Cardiac septum (tissue), 1 donor: ENCODE measurements at regions of chr11 and their contacts with region 1.

Region 1: GRCh38 chr11:12693479-12694181 is 19.4 kb downstream of the TEAD1 start:
- DNase-seq: no peak

Region 2: GRCh38 chr11:12377824-12378593 is 315.6 kb before region 1 on chr11:
- intact Hi-C with region 1: loop called (anchors 5 kb)
- DNase-seq: peak; percentile 84

Region 3: GRCh38 chr11:12653725-12654124 is 39.9 kb before region 1 on chr11:
- intact Hi-C with region 1: no loop called
- DNase-seq: no peak

Region 4: DNA sequence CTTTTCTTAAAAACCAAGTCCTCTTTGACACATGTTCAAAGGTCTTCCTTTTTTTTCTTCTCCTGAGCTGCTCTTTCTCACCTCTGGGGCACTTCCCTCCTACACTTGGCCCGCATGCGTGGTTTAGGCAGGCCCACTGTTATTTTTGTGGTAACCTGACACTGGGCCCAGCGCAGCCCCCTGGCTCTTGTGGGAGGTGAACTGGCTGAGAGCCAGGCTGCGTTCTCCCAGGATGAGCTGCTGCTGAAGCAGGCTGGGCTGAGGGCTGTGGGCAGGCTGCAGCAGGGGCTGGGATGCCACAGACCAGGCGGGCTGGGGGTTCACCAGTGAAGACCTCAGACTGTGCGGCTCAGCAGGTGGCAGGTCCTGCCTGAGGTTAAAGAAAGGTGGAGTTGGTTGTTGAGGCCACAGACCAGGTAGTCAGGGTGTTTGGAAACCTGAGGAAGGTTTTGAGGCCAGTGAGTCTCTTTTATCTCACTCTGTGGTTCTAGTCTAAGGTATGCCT is 53.0 kb after region 1 on chr11:
- intact Hi-C with region 1: loop called (anchors 10 kb)
- DNase-seq: peak; percentile 83